ENCODE measurements at regions of chr5 and their contacts with region 1.

Region 1: GRCh38 chr5:41856644-41857491 is 13.4 kb downstream of the OXCT1 start:
- DNase-seq: no peak
- H3K4me3 ChIP-seq: no peak overlapping the region
- CTCF ChIP-seq: peak; percentile 57

Region 2: DNA sequence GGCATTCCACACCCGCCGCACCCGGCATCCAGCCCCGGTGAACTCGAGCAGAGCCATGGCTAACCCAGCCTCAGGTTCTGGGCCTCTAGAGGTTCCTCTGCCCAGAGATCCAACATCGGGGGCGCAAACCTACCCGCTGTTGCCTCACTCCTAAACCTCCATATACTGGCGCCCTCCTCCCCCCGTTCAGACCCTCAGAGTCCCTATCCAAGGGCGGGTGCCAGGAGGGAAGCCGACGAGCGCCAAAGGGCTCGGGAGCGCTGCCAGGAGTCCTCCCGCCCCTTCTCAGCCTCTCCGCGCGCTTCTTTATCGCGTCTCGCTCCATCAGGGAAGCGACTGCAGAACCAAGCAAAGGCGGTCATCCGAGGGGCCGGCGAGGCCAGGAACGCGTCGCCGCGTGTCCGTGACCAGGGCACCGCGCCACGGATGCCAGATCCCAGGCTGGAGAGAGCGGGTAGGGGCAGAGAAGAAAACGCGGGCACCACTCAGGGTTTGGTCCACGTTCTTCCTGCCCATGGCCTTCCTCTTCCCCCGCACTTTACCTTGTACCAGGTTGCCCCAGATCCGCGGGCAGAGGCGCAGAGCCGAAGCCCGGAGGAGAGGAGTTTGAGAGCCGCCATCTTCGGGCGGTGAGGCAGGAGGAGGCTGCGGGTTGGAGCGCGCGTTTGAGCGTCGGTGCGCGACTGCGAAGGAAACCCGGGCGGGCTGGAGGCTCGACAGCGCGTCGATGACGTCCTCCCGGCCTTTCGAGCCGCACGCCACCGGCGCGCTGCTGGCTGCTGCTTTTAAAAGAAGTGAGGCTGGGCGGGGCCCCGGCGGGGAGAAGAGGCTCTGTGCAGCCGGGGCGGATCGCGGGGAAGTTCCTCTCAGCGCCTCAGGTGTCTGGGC is 13.1 kb after region 1 on chr5 and contains the start of gene OXCT1:
- CTCF ChIA-PET with region 1: interaction called, 49 read pairs
- POLR2A ChIA-PET with region 1: no interaction called
- DNase-seq: no peak
- H3K4me3 ChIP-seq: peak within 1 kb of the TSS; percentile 83
- CTCF ChIP-seq: no peak

Region 3: DNA sequence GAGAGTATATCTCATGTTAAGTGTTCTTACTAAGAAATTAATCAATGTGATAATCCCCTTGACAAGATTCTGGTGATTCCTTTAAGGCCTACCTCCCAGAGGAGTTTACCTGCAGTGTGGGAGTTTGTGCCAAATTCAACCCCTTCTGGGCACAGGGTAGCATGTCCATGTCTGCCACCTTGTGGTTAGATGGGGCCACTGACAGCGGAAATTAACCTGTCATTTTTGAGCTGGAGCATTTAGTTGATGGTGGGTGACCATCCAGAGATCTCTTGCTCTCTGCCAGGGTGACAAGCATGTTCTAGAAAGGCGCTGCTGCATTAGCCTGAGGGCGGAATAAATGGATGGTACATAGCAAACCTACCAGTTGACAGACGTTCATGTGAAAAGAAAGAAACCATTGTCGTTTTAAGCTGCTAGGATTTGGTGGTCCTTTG is 200.4 kb after region 1 on chr5:
- CTCF ChIA-PET with region 1: interaction called, 174 read pairs
- POLR2A ChIA-PET with region 1: no interaction called
- DNase-seq: no peak
- H3K4me3 ChIP-seq: no peak overlapping the region
- CTCF ChIP-seq: peak; percentile 70

Region 4: GRCh38 chr5:42583322-42583721 is 726.5 kb after region 1 on chr5:
- CTCF ChIA-PET with region 1: interaction called, 21 read pairs
- POLR2A ChIA-PET with region 1: no interaction called
- DNase-seq: no peak
- H3K4me3 ChIP-seq: no peak overlapping the region
- CTCF ChIP-seq: peak; percentile 69

Region 5: GRCh38 chr5:42767491-42768105 is 910.7 kb after region 1 on chr5:
- CTCF ChIA-PET with region 1: interaction called, 13 read pairs
- POLR2A ChIA-PET with region 1: no interaction called
- DNase-seq: no peak
- H3K4me3 ChIP-seq: no peak overlapping the region
- CTCF ChIP-seq: peak; percentile 29

Region 6: DNA sequence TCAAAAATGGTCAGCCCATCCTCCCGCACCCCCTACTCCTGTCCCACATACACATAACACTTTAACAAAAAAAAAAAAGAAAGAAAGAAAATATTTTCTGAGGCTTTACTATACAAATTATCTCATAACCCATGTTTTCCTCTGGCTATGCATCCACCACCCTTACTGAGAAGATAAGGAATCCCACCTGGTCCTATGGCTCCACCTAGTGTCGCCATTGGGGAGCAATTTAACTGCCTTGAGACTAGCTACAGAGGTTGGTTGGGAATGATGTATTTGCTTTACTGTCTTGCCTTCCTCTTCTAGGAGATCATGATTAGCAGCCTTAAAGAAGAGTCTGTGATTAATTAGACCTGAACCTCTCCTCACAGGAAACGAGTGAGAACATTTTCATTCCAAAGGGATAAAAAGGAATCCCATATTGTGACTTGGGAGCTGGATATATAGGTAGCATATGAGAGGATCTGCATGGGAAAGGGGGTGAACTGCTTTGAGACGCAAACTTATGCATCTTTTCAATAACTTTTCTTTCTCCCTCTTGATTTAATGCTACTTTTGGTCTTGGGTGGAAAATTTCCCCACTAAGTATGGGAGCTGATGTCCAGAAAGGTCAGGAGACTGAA is 1032.6 kb after region 1 on chr5:
- CTCF ChIA-PET with region 1: interaction called, 24 read pairs
- POLR2A ChIA-PET with region 1: no interaction called
- DNase-seq: no peak
- H3K4me3 ChIP-seq: no peak overlapping the region
- CTCF ChIP-seq: peak; percentile 84

Region 7: GRCh38 chr5:43019614-43020293 is 1162.9 kb after region 1 on chr5:
- CTCF ChIA-PET with region 1: no interaction called
- POLR2A ChIA-PET with region 1: no interaction called
- DNase-seq: no peak
- H3K4me3 ChIP-seq: peak overlapping the region; percentile 74
- CTCF ChIP-seq: peak; percentile 70